Heart right ventricle (tissue), 16 donors: ENCODE measurements at regions of chr20 and their contacts with region 1.

Region 1: GRCh38 chr20:58236612-58237330 is 8.3 kb upstream of the ANKRD60 start:
- DNase-seq: peak; percentile 62 to 77
- ATAC-seq: peak; percentile 87 to 94 (median 92)
- H3K4me3 ChIP-seq: peak overlapping the region in 9 of 10 donors; percentile 26 to 66 (median 50)
- H3K27ac ChIP-seq: no peak overlapping the region
- H3K4me1 ChIP-seq: peaks cover 0 to 17% (median 5%) of the 10 kb centered on the region in 9 donors
- H3K27me3 ChIP-seq: peaks cover 0 to 7% (median 0%) of the 10 kb centered on the region in 7 donors
- CTCF ChIP-seq: peak; percentile 90 to 98 (median 96)

Region 2: DNA sequence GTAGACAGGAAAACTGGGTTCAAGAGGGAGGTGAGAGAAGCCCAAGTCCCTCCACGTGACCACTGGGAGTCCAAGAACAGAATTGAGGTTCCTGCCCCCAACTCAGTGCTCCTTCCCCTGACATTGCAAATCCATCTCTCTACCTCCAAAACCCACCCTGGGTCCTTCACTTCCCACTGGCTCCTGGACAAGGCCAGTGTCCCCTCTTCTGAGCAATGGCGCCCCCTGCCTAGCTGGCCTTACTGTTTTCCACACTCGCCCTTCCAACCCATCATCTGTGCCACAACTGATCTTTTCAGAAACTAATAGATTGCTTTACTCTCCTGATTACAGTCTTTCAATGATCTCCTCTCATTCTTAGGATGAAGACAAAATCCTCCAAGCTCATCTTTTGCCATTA is 208.6 kb before region 1 on chr20:
- intact Hi-C with region 1: no loop called
- DNase-seq: no peak
- ATAC-seq: no peak
- H3K4me3 ChIP-seq: no peak overlapping the region
- H3K27ac ChIP-seq: no peak overlapping the region
- H3K4me1 ChIP-seq: peaks cover 0 to 16% (median 0%) of the 10 kb centered on the region in 9 donors
- H3K27me3 ChIP-seq: peaks cover 0 to 26% (median 8%) of the 10 kb centered on the region in 7 donors
- CTCF ChIP-seq: peak in 7 of 9 donors; percentile 7 to 48 (median 28)

Region 3: GRCh38 chr20:58388882-58389323 is 152.1 kb after region 1 on chr20 and contains the start of gene VAPB:
- intact Hi-C with region 1: loop called in 1 of 10 experiments (anchors 10 kb)
- DNase-seq: peak; percentile 94 to 97
- ATAC-seq: peak; percentile 99 to 100 (median 100)
- H3K4me3 ChIP-seq: peak within 1 kb of the TSS; percentile 68 to 95 (median 82)
- H3K27ac ChIP-seq: peak within 1 kb of the TSS; percentile 70 to 99 (median 96)
- H3K4me1 ChIP-seq: peaks cover 3 to 47% (median 38%) of the 10 kb centered on the region in 9 donors
- H3K27me3 ChIP-seq: no peaks in the 10 kb centered on the region
- CTCF ChIP-seq: no peak
- total RNA-seq, gene VAPB: 59.9 to 89.9 (median 70.8) TPM

Region 4: DNA sequence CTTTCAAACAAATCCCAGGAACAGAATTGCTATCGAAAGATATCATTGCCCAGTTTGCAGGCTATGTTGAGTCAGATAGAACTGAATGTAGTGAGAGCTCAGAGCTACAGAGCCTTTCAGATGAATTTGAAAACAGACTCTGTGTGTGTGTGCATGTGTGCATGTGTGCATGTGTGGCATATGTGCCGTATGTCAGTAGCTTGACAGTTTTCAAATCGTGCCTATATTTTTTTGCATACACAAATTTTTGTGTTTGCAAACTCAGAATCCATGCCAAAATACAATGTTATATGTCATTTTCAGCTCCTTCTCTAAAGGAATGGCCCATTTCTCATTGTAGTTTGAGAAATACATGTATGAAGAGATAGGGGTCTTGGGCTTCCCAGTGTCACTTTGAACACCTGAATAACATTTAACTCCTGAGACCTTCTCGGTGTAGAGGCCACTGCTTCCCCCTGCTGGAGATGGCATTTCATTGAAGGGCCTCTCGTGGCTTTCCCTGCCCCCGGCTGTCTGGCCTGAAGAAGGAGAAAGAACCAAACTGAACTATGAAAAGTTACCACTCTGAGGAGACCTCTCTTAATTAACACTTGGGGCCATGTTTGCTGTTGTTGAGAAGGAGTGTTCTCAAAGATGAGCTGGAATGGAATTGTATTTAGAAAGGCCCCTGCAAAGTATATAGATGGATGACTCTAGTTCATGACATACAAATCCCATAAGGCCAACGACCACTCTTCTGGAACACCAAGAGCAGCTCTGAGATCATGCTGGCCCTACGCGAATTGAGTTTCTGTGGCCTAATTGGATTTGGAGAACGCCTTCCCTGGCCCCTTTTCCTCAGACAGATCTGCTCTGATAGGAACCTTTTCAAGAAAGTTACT is 211.0 kb after region 1 on chr20:
- intact Hi-C with region 1: loop called (anchors 1 to 5 kb)
- DNase-seq: no peak
- ATAC-seq: peak in 5 of 8 donors; percentile 40 to 72 (median 61)
- H3K4me3 ChIP-seq: no peak overlapping the region
- H3K27ac ChIP-seq: no peak overlapping the region
- H3K4me1 ChIP-seq: peaks cover 0 to 14% (median 0%) of the 10 kb centered on the region in 9 donors
- H3K27me3 ChIP-seq: no peaks in the 10 kb centered on the region
- CTCF ChIP-seq: peak; percentile 8 to 66 (median 60)

Region 5: DNA sequence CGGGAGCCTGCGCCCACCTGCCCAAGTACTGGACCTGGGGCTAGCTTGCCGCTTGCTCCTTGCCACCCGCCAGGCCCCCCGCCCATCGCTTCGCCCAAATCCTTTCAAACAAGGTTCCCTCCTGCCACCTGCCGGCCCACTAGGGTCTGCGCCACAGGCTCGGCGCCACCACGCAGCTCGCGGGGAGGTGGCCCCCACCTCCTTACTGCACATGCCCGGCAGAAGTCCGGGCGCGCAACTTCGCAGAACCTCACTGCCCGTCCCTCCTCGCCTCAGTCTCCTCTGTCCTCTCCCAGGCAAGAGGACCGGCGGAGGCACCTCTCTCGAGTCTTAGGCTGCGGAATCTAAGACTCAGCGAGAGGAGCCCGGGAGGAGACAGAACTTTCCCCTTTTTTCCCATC is 602.7 kb after region 1 on chr20:
- intact Hi-C with region 1: loop called in 6 of 10 experiments (anchors 5 to 10 kb)
- DNase-seq: peak; percentile 34 to 43
- ATAC-seq: peak; percentile 55 to 75 (median 72)
- H3K4me3 ChIP-seq: peak overlapping the region in 7 of 10 donors; percentile 3 to 40 (median 25)
- H3K27ac ChIP-seq: no peak overlapping the region
- H3K4me1 ChIP-seq: peaks cover 0 to 14% (median 3%) of the 10 kb centered on the region in 9 donors
- H3K27me3 ChIP-seq: peaks cover 0 to 84% (median 60%) of the 10 kb centered on the region in 7 donors
- CTCF ChIP-seq: peak in 8 of 9 donors; percentile 19 to 62 (median 50)

Region 6: DNA sequence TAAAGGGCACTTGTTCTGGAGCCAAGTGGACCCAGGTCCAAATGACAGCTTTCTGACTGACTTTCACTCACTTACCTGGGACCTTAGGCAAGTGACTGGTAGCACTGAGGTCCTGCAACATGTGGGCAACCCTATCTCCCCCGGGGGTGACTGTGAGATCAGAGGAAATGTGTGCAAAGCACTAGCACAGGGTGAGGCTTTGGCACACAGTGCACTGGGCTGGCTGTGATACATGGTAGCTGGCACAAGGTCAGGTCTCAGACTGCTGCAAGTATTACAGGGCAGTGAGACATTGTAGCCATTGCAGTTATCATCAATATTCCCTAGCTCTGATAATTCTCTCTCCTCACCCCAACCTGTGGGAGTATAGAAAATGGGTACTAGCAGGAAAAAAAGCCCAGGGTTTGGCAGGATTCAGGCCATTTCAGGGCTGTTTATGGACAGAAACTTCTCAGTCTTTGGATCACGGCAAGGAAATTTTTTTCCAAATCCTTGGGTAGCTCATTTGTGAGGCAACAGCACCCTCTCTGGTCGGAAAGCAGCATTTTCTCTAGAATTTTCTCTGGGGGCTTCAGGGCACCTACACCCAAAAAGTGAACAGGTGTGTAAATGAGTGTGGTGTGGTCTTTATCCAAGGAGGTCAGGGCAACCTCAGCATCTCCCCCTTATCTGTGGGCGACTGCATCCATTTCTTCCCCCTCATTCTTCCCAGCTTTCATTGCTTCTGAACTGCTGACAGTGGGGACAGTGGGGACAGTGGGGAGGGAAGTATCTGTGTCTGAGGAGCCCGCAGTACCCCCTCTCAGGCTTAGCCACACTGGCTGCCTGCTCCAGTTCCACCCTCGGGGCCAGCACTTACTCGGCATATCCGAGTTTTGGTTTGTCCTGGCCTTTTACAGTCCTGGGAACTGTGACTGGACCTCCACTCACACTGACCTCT is 1218.9 kb after region 1 on chr20:
- intact Hi-C with region 1: loop called in 1 of 10 experiments (anchors 5 kb)
- DNase-seq: peak in 1 of 2 donors; percentile 28
- ATAC-seq: peak in 7 of 8 donors; percentile 39 to 86 (median 54)
- H3K4me3 ChIP-seq: no peak overlapping the region
- H3K27ac ChIP-seq: no peak overlapping the region
- H3K4me1 ChIP-seq: peaks cover 0 to 16% (median 4%) of the 10 kb centered on the region in 9 donors
- H3K27me3 ChIP-seq: peaks cover 0 to 43% (median 15%) of the 10 kb centered on the region in 7 donors
- CTCF ChIP-seq: peak; percentile 11 to 66 (median 55)